ENCODE measurements at regions of chr6 and their contacts with region 1.

Region 1: DNA sequence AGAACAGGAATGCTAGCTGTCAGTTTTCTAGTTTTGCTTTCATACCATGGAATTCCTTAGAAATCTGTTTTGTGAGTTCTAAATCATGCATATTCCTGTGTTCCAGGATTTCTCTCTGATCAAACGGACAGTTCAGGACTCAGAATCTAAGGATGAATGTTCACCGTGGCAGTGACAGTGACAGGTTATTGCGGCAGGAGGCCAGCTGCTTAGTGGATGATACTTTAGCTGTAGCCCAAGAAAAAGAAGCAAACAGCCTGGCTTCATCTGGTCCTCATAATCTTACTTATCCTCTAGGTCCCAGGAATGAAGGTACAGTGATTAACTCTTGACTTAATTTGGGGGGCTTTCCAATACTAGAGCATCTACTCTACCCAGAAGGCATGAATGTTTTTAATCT is 27.1 kb downstream of the KCTD20 start:
- DNase-seq: no peak
- ATAC-seq: no peak
- H3K4me3 ChIP-seq: no peak overlapping the region
- H3K4me3 Mint-ChIP-seq: no peak overlapping the region
- H3K27ac ChIP-seq: no peak overlapping the region
- H3K27ac Mint-ChIP-seq: peak overlapping the region in 4 of 9 donors; percentile 9 to 84 (median 62)
- H3K4me1 ChIP-seq: peaks cover 0 to 4% of the 10 kb centered on the region in 2 donors
- H3K4me1 Mint-ChIP-seq: peaks cover 7 to 26% (median 21%) of the 10 kb centered on the region in 7 donors
- H3K27me3 ChIP-seq: no peaks in the 10 kb centered on the region
- H3K27me3 Mint-ChIP-seq: no peaks in the 10 kb centered on the region

Region 2: DNA sequence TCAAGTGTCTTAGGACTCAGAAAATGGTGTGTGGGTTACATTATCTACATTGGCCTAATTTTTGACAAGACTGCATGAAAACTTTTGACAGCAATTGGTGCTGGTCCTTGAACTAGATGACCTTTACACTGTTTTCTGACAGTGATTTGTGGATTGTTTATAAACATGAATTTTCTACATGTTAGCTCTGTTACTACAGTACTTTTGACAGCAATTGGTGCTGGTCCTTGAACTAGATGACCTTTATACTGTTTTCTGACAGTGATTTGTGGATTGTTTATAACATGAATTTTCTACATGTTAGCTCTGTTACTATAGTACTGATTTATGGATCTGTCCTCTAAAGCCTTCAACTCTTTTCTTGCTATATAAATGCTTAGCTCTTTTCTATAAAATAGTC is 10.4 kb before region 1 on chr6:
- CTCF ChIA-PET with region 1: no interaction called
- POLR2A ChIA-PET with region 1: interaction called, 5 read pairs
- intact Hi-C with region 1: loop called in 1 of 2 experiments (anchors 2 kb)
- DNase-seq: no peak
- ATAC-seq: no peak
- H3K4me3 ChIP-seq: no peak overlapping the region
- H3K4me3 Mint-ChIP-seq: no peak overlapping the region
- H3K27ac ChIP-seq: no peak overlapping the region
- H3K27ac Mint-ChIP-seq: peak overlapping the region in 1 of 9 donors; percentile 40
- H3K4me1 ChIP-seq: peaks cover 5 to 8% of the 10 kb centered on the region in 2 donors
- H3K4me1 Mint-ChIP-seq: peaks cover 15 to 66% (median 57%) of the 10 kb centered on the region in 7 donors
- H3K27me3 ChIP-seq: no peaks in the 10 kb centered on the region
- H3K27me3 Mint-ChIP-seq: no peaks in the 10 kb centered on the region

Region 3: DNA sequence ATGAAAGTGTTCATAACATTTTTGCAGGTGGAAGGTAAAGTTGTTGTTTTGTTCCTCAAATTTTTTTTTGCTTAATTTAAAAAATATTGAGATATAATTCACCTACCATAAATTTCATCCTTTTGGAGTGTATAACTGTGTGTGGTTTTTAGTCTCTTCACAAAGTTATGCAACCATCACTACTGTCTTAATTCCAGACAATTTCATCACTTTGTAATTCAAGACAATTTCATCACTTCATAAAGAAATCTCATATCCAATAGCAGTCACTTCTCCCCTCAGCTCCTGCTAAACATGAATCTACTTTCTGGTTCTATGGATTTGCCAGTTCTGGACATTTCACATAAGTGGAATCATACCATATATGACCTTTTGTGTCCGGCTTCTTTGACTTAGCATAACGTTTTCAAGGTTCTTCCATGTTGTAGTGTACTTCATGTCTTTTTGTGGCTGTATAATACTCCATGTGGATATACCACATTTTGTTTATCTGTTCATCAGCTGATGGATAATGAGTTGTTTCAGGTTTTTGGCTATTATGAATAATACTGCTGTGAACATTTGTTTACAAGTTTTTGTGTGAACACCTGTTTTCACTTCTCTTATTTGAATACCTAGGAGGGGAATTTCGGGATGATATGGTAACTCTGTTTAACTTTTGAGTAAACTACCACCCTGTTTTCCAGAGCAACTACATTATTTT is 1368.4 kb after region 1 on chr6:
- CTCF ChIA-PET with region 1: no interaction called
- POLR2A ChIA-PET with region 1: no interaction called
- intact Hi-C with region 1: no loop called
- DNase-seq: no peak
- ATAC-seq: no peak
- H3K4me3 ChIP-seq: no peak overlapping the region
- H3K4me3 Mint-ChIP-seq: peak overlapping the region in 1 of 10 donors; percentile 16
- H3K27ac ChIP-seq: no peak overlapping the region
- H3K27ac Mint-ChIP-seq: no peak overlapping the region
- H3K4me1 ChIP-seq: no peaks in the 10 kb centered on the region
- H3K4me1 Mint-ChIP-seq: peaks cover 14 to 67% (median 44%) of the 10 kb centered on the region in 7 donors
- H3K27me3 ChIP-seq: no peaks in the 10 kb centered on the region
- H3K27me3 Mint-ChIP-seq: no peaks in the 10 kb centered on the region